Ovary (tissue), 10 donors: ENCODE measurements at regions of chr7 and their contacts with region 1.

Region 1: DNA sequence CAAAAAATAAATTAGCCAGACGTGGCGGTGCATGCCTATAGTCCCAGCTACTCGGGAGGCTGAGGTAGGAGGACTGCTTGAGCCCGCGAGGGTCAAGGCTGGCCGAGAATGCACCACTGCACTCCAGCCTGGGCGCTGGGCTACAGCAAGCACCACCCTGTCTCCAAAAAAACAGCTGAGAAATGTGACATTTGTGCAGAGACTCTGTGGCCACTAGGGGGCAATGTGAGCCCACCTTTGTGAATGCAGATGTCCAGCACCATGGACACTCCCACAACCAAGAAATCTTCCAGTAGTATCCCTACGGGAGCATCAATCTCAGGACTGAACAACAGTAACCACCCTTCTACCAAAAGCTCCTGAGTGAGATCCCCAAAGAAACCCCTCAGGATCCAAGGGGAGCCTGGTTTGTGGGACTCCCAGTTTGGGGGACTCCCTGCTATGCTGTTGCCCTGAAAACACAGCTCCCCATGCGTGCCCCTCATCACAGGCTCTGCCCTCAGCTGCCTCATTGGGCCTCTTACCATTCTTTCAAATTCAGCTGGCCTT is 6.2 kb upstream of the AHCYL2 start:
- DNase-seq: peak; percentile 79 to 88 (median 86)
- H3K4me3 ChIP-seq: no peak overlapping the region
- H3K27ac ChIP-seq: no peak overlapping the region
- H3K4me1 ChIP-seq: no peaks in the 10 kb centered on the region
- H3K27me3 ChIP-seq: no peaks in the 10 kb centered on the region
- CTCF ChIP-seq: peak; percentile 75 to 93 (median 81)
- EP300 ChIP-seq: no peak
- POLR2A ChIP-seq: no peak

Region 2: DNA sequence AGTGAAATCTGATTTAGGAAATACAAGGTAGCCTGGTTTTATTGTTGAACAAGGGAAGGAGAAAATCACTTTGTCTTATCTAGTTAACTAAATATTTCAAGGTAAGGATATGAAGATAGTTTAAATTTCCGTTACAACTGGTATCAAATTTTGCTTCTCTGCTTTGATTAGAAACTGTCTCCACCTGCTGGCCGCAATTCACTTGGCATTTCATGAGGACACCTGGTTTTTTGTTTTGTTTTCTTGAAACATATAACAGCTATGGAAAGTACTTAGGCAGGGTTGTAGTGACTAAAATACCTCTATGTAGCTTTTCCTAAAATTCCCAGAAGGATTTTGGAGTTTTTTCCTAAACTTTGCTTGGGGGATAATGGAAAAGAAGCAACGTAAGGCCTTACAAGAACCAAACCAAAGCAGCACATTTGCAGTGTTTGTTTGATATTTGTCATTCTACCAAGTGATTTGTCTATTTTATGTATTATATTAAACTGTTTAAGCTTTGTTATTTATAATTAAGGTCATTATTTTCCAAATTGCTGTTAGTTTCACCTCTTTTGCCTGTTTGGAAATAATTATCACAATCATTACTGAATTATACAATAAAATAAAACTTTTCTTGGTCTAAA is 79.8 kb after region 1 on chr7:
- intact Hi-C with region 1: loop called in 3 of 4 experiments (anchors 5 to 10 kb)
- DNase-seq: peak; percentile 24 to 61 (median 53)
- H3K4me3 ChIP-seq: no peak overlapping the region
- H3K27ac ChIP-seq: no peak overlapping the region
- H3K4me1 ChIP-seq: no peaks in the 10 kb centered on the region
- H3K27me3 ChIP-seq: no peaks in the 10 kb centered on the region
- CTCF ChIP-seq: peak; percentile 35 to 48 (median 39)
- EP300 ChIP-seq: no peak
- POLR2A ChIP-seq: no peak

Region 3: DNA sequence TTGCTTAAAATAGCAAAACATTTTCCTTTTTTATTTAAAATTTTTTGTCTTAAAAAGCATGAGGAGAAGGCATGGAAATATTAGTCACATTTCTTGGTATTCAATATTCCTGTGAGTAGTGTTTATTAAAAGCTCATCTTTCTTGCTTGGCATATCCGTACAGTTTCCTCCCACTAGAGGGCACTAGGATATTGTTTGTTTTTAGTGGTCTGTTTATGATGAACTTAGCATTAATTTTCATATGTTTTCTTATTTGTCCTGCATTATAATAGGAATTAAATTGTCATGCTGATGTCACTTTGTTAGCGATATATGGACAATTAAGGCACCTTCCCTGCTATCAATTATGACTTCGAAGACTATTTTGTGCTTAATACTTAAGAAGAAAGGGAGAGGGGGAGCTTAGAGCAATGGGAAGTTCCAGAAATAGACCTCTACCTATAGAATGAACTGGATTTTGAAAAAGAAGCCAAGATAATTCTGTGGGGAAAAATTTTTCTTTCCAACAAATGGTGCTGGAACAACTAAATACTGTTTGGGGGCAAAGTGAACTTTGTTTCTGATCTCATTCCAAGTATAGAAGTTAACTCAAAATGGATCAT is 124.6 kb after region 1 on chr7:
- intact Hi-C with region 1: no loop called
- DNase-seq: no peak
- H3K4me3 ChIP-seq: no peak overlapping the region
- H3K27ac ChIP-seq: no peak overlapping the region
- H3K4me1 ChIP-seq: no peaks in the 10 kb centered on the region
- H3K27me3 ChIP-seq: no peaks in the 10 kb centered on the region
- CTCF ChIP-seq: peak; percentile 36 to 54 (median 38)
- EP300 ChIP-seq: no peak
- POLR2A ChIP-seq: no peak

Region 4: DNA sequence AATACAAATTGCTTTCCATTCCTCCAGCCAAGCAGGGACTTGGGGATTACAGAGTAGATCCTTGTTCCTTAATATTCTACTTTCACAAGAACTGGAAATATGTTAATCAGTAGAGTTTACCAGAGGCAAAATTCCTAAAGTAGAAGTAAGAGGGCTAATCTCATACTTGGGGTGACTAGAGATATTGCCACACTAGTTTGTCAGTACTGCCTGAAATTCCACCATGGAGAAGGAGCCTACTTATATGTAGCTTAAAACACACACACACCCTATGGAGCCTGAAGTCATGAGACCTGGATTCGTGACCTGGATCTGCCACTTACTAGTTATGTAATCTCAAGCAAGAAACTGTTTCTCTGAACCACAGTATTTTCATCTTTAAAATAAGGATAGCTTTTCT is 249.5 kb after region 1 on chr7:
- intact Hi-C with region 1: loop called (anchors 2 to 10 kb)
- DNase-seq: no peak
- H3K4me3 ChIP-seq: no peak overlapping the region
- H3K27ac ChIP-seq: no peak overlapping the region
- H3K4me1 ChIP-seq: no peaks in the 10 kb centered on the region
- H3K27me3 ChIP-seq: no peaks in the 10 kb centered on the region
- CTCF ChIP-seq: no peak
- EP300 ChIP-seq: no peak
- POLR2A ChIP-seq: no peak